Heart left ventricle (tissue), 16 donors: ENCODE measurements at regions of chr13 and their contacts with region 1.

Region 1: GRCh38 chr13:59677966-59678814 is 485.5 kb downstream of the DIAPH3 start:
- DNase-seq: peak in 1 of 5 donors; percentile 16
- ATAC-seq: peak; percentile 87 to 95 (median 90)
- H3K4me3 ChIP-seq: no peak overlapping the region
- H3K27ac ChIP-seq: peak overlapping the region in 9 of 12 donors; percentile 0 to 64 (median 46)
- H3K4me1 ChIP-seq: peaks cover 0 to 21% (median 12%) of the 10 kb centered on the region in 12 donors
- H3K27me3 ChIP-seq: no peaks in the 10 kb centered on the region
- CTCF ChIP-seq: peak; percentile 71 to 91 (median 84)
- POLR2A ChIP-seq: no peak

Region 2: GRCh38 chr13:59318320-59318930 is 359.8 kb before region 1 on chr13:
- intact Hi-C with region 1: loop called in 2 of 10 experiments (anchors 5 to 10 kb)
- DNase-seq: peak; percentile 69 to 79 (median 77)
- ATAC-seq: peak in 3 of 4 donors; percentile 56 to 68 (median 56)
- H3K4me3 ChIP-seq: no peak overlapping the region
- H3K27ac ChIP-seq: peak overlapping the region in 4 of 12 donors; percentile 6 to 47 (median 18)
- H3K4me1 ChIP-seq: peaks cover 0 to 15% (median 0%) of the 10 kb centered on the region in 12 donors
- H3K27me3 ChIP-seq: no peaks in the 10 kb centered on the region
- CTCF ChIP-seq: peak; percentile 63 to 88 (median 76)
- POLR2A ChIP-seq: no peak

Region 3: DNA sequence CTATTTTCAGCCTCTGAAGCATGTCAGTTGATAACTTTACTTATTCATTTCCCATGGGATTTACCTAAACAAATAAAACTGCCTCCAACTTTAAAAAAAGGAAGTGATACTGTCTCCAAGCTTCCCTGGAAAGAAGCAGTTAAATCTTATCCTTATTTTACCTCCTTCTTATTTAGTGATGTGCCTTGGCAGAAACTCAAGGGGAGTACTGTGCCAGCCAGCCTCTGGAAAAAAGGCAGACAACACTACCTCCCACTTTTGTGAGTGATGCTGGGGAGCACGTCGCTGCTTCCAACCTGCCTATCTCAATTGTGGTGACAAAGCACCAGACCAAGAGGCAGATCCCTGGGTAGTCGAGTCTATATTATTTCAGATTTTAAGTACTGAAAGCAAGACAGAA is 280.1 kb before region 1 on chr13:
- intact Hi-C with region 1: loop called in 9 of 10 experiments (anchors 2 to 10 kb)
- DNase-seq: peak in 3 of 5 donors; percentile 24 to 51 (median 31)
- ATAC-seq: peak in 3 of 4 donors; percentile 26 to 48 (median 29)
- H3K4me3 ChIP-seq: no peak overlapping the region
- H3K27ac ChIP-seq: peak overlapping the region in 3 of 12 donors; percentile 23 to 37 (median 25)
- H3K4me1 ChIP-seq: peaks cover 0 to 18% (median 6%) of the 10 kb centered on the region in 12 donors
- H3K27me3 ChIP-seq: no peaks in the 10 kb centered on the region
- CTCF ChIP-seq: no peak
- POLR2A ChIP-seq: no peak

Region 4: GRCh38 chr13:59477011-59477410 is 201.2 kb before region 1 on chr13:
- intact Hi-C with region 1: loop called in 1 of 10 experiments (anchors 10 kb)
- DNase-seq: no peak
- ATAC-seq: peak in 1 of 4 donors; percentile 26
- H3K4me3 ChIP-seq: no peak overlapping the region
- H3K27ac ChIP-seq: peak overlapping the region in 6 of 12 donors; percentile 12 to 48 (median 33)
- H3K4me1 ChIP-seq: peaks cover 0 to 54% (median 17%) of the 10 kb centered on the region in 12 donors
- H3K27me3 ChIP-seq: no peaks in the 10 kb centered on the region
- CTCF ChIP-seq: peak in 10 of 12 donors; percentile 21 to 51 (median 34)
- POLR2A ChIP-seq: no peak

Region 5: DNA sequence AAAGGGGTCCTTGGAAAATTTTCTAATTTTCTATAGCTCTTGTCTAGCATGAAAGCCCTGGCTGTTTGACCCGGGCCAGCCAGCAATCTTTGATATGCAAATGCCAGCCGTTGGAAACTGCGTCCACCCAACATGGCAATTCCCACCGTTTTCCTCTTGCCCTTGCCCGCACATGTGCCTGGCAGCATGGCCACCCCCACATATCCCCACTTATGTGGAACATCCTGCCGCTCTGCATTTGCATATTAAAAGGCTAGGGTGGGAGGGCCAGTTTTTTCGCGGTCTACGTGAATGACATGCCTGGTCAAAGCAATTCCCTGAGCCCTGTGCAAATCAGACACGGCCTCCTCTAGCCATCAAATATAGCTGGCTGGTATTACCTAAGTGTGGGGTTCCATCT is 608.5 kb after region 1 on chr13:
- intact Hi-C with region 1: loop called in 1 of 10 experiments (anchors 5 kb)
- DNase-seq: no peak
- ATAC-seq: no peak
- H3K4me3 ChIP-seq: no peak overlapping the region
- H3K27ac ChIP-seq: no peak overlapping the region
- H3K4me1 ChIP-seq: no peaks in the 10 kb centered on the region
- H3K27me3 ChIP-seq: peaks cover 0 to under 1% (median 0%) of the 10 kb centered on the region in 9 donors
- CTCF ChIP-seq: no peak
- POLR2A ChIP-seq: no peak

Region 6: DNA sequence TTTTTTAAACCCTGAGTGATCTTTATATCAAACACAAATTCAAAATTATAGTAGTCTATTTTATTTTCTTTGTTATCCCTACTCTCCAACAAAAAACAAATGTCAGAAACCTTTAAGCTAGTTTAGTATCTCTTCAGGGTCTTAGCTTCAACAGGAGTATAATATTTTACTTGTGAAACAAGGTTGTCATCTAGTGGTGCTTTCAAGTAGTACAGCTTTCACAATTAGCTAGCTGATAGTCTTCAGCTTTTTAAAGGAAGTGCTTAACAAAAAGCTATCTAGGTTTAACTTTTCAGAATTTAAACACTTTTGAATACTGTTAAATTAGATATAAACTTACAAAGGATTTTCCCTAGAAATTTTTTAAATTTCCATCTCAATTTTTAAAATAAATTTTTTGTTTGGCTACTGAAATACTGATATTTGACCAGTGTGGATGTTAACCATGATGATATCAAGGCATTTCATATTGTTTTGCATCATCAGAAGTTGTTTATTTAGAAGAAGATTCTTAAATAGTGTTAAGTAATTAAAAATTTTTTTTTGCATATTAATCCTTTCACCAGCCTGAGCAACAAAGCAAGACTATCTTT is 753.0 kb after region 1 on chr13:
- intact Hi-C with region 1: loop called in 3 of 10 experiments (anchors 5 to 10 kb)
- DNase-seq: no peak
- ATAC-seq: peak in 3 of 4 donors; percentile 66 to 81 (median 77)
- H3K4me3 ChIP-seq: no peak overlapping the region
- H3K27ac ChIP-seq: no peak overlapping the region
- H3K4me1 ChIP-seq: no peaks in the 10 kb centered on the region
- H3K27me3 ChIP-seq: no peaks in the 10 kb centered on the region
- CTCF ChIP-seq: peak; percentile 88 to 97 (median 93)
- POLR2A ChIP-seq: no peak